HEK293 (cell line): ENCODE measurements at regions of chr19 and their contacts with region 1.

Region 1: DNA sequence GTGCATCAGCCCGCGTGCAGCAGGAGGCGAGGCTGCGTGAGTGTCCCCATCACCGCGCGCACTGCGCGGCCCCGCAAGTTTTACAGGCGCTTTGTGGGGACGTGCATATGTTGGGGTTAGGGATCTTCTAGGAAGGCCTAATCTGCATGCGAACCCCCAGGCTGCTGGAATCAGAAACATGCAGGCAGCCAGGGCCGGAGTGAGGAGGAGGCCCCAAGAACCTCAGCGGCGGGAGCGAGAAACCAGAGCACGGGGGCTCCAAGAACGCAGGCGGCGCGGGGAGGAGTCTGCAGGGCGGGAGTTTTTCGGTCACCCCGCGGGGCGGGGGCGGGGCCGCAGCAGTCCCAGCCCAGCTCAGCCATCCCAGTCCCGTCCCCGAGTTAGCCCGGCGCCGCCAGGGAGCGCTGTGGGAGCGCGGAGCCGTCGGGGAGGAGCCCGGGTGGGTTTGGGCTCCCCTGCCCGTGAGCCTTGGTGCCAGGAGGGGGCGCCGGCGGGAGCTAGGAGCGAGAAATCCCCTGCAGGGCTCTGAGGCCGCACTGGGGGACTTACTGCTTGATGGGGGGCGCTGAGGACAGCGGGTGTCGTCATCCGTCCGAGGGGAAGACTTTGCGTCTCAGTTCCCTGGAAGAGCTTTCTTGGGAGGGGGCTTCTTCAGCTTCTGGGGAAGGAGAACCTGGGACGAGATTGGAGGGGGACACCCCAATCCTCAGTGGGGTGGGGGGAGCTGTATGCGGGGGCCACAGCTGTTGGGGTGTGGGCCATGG is 933 bp upstream of the NRTN start:
- H3K4me3 ChIP-seq: peak overlapping the region; percentile 25
- H3K27ac ChIP-seq: no peak overlapping the region
- H3K4me1 ChIP-seq: peaks cover 3% of the 10 kb centered on the region; the same call in 1 of the 2 replicates
- CTCF ChIP-seq: peak; percentile 99

Region 2: DNA sequence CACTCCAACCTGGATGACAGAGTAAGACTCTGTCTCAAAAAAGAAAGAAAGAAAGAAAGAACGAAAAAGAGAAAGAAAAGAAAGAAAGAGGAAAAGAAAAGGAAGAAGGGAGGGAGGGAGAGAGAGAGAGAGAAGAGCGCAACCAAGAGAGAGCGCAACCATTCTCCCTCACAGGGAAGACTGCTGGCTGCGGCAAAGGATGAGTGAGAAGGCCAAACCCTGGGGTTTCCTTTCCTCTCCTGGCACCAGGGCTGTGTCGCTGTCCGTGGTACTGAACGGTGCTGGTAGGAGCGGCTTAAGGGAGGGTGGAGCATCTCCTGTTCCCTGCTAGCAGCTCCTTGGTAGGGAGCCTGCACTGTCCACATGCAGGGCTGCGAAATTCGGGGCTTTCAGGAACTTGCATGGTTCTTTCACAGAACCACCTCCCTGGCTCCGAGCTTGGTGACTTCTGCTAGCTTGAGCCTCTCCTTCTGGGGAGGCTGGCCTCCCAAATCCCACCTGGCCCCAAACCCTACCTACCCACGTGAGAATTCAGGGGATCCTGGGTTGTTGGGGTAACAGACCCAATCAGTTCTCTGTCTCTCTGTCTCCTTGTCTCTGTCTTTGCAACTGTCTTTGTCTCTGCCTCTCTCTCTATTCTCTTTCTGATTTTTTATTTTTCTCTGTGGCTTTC is 399.8 kb before region 1 on chr19:
- CTCF ChIA-PET with region 1: no interaction called
- POLR2A ChIA-PET with region 1: no interaction called
- H3K4me3 ChIP-seq: no peak overlapping the region
- H3K27ac ChIP-seq: no peak overlapping the region
- H3K4me1 ChIP-seq: no peaks in the 10 kb centered on the region
- CTCF ChIP-seq: no peak

Region 3: DNA sequence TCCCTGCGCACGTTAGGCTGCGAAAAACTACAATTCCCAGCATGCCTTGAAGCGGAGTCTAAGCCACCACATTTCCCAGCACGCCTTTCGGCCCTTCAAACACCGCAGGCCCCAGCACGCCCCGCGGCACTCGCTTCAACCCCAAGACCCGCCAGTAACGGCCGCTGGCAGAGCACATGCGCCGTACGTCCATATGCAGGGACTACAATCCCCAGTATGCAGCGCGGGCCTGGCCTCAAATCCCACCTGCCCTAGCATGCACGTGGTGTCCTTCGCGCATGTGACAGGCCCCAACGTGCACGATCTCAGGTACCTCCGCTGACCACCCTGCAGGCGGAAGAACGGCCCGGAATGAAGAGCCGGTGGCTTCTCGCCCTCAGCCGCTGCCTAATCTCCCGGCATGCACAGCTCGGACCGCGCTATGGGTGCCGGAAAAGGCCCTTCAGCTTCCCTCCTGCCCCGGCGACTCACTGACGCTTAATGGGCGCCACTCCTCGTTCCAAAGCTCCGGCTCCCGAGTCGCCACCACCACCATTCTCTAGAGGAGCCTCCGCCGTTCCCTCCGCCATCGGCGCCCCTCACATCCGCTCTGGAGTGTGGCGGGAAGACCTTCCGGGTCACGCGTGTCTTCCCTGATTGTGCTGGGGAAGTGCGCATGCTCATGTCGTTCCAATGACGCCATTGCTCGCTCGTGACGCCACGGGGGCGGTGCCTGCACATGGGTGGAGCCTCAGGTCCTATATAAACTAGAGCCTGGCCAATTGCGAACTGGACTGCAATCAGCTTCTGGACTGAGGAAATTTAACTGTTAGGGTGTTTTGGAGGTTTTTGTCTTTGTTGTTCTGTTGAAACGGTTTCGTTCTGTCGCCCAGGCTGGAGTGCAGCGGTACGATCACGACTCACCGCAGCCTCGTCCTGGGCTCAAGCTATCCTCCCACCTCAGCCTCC is 13.1 kb before region 1 on chr19 and contains the start of gene DUS3L:
- CTCF ChIA-PET with region 1: interaction called, 41 read pairs
- POLR2A ChIA-PET with region 1: interaction called, 8 read pairs
- H3K4me3 ChIP-seq: peak within 1 kb of the TSS; percentile 71
- H3K27ac ChIP-seq: peak within 1 kb of the TSS; percentile 82
- H3K4me1 ChIP-seq: no peaks in the 10 kb centered on the region
- CTCF ChIP-seq: peak; percentile 23

Region 4: DNA sequence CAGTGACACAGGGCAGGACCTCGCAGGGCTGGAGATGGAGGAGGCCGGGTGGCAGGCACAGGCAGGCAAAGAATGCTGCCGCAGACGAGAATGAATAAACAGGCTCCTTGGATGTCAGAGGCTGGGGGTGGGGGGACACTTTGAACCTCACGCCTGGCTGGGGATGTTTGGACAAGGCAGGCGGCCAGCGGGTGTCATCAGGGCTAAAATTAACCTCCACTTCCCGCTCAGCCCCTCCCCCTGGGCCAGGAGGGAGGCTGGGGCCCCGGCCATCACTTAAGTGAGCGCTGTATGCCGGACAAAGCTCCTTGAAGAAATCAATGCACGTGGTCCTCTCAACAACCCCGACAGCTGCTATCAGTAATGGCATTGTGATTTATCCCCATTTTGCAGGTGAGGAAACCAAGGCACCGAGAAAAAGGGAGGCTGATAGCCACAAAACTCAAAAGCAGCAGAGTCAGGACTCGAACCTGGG is 76.7 kb after region 1 on chr19:
- CTCF ChIA-PET with region 1: interaction called, 30 read pairs
- POLR2A ChIA-PET with region 1: interaction called, 3 read pairs
- H3K4me3 ChIP-seq: no peak overlapping the region
- H3K27ac ChIP-seq: no peak overlapping the region
- H3K4me1 ChIP-seq: no peaks in the 10 kb centered on the region
- CTCF ChIP-seq: no peak

Region 5: GRCh38 chr19:5904352-5905113 is 100.6 kb after region 1 on chr19 and contains the start of gene VMAC:
- CTCF ChIA-PET with region 1: interaction called, 56 read pairs
- POLR2A ChIA-PET with region 1: interaction called, 29 read pairs
- H3K4me3 ChIP-seq: peak within 1 kb of the TSS; percentile 97
- H3K27ac ChIP-seq: peak within 1 kb of the TSS; percentile 88
- H3K4me1 ChIP-seq: no peaks in the 10 kb centered on the region
- CTCF ChIP-seq: no peak

Region 6: DNA sequence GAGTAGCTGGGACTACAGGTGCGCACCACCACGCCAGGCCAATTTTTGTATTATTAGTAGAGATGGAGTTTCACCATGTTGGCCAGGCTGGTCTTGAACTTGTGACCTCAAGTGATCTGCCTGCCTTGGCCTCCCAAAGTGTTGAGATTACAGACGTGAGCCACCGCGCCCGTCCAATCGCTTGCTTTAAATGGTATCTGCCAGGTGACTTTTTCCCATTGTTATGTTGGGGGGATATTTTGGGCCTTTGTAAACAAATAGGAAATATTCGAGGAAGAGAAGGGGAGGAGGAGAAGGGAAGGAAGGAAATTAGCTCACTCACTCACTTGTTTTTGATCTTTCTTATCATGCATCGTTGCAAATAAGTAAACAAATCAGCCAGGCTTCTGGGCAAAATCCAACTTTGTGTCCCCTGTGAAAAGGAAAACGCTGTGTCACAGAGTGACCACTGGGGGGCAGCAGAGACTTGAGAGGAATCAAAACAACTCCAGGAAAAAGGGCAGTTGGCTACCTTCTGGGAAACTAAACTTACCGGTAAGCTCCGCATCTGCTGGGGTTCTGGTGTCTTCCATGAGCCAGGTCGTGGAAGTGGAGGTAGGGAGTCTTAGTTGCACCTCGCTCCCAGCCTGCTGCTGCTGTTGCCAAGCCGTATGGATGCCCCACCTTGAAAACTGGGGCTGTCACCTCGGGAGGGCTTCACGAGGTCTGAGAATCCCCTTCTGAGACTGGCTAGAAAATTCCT is 183.3 kb after region 1 on chr19:
- CTCF ChIA-PET with region 1: interaction called, 20 read pairs
- POLR2A ChIA-PET with region 1: no interaction called
- H3K4me3 ChIP-seq: peak overlapping the region; percentile 23
- H3K27ac ChIP-seq: no peak overlapping the region
- H3K4me1 ChIP-seq: no peaks in the 10 kb centered on the region
- CTCF ChIP-seq: peak; percentile 77